WTC11 (cell line): ENCODE measurements at regions of chr22 and their contacts with region 1.

Region 1: GRCh38 chr22:35257321-35258190 is at the start of gene HMGXB4:
- DNase-seq: peak; percentile 85
- ATAC-seq: peak; percentile 77
- H3K4me3 Mint-ChIP-seq: peak within 1 kb of the TSS; percentile 90
- H3K27ac Mint-ChIP-seq: peak within 1 kb of the TSS; percentile 96
- H3K4me1 Mint-ChIP-seq: peaks cover 26% of the 10 kb centered on the region
- H3K27me3 Mint-ChIP-seq: 0 out of 2 replicates have a peak, but pooled peaks cover 2% of the 10 kb centered on the region
- CTCF ChIP-seq: no peak
- total RNA-seq, gene HMGXB4: 34.6 to 42.1 TPM (median 36.8 TPM) in 3 replicates

Region 2: GRCh38 chr22:35172442-35172841 is 85.1 kb before region 1 on chr22:
- CTCF ChIA-PET with region 1: no interaction called
- POLR2A ChIA-PET with region 1: no interaction called
- DNase-seq: no peak
- ATAC-seq: no peak
- H3K4me3 Mint-ChIP-seq: no peak overlapping the region
- H3K27ac Mint-ChIP-seq: no peak overlapping the region
- H3K4me1 Mint-ChIP-seq: peaks cover 6% of the 10 kb centered on the region
- H3K27me3 Mint-ChIP-seq: peaks cover 19% of the 10 kb centered on the region
- CTCF ChIP-seq: no peak

Region 3: DNA sequence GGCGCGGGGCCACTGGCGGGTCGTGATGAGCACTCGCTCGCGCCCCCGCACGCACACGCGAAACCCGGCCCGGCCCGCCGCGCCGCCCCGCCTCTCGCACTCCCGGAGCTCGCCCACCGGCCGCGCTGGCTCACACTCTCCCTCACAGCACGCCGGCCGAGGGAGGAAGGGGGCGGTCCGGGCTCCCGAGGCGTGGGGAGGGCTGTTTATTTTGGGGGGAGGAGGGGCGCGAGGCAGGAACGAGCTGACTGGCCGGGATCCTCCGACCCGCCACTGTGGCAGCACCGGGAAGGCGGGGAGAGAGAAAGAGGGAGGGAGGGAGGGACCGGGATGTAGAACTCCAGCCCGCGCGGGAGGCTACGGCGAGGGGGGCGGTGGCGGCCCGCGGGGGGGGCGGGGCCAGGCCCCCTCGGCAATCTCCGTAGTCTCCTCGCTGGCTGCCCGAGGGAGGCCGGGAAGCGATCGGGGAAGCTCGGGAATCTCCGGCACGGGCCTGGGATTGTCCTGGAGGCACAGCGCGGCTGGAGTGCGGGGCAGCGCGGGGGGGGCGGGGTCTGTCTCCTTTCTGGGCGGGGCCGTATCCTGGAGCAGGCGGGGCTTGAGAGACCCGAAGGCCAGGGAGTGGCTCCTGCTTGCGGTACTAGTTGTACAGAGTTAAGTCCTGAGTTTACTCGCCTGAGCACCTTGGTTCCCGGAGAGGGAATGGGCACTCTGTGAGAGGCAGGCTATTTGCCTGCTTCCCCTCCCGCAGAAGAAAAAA is 771.3 kb after region 1 on chr22 and contains the start of gene RBFOX2:
- CTCF ChIA-PET with region 1: no interaction called
- POLR2A ChIA-PET with region 1: interaction called, 13 read pairs
- DNase-seq: peak; percentile 99
- ATAC-seq: peak; percentile 97
- H3K4me3 Mint-ChIP-seq: peak within 1 kb of the TSS; percentile 90
- H3K27ac Mint-ChIP-seq: peak within 1 kb of the TSS; percentile 88
- H3K4me1 Mint-ChIP-seq: peaks cover 30% of the 10 kb centered on the region
- H3K27me3 Mint-ChIP-seq: no peaks in the 10 kb centered on the region; the same call in 1 of the 2 replicates
- CTCF ChIP-seq: no peak
- total RNA-seq, gene RBFOX2: 102 to 107 TPM (median 103 TPM) in 3 replicates